Activated CD8-positive, alpha-beta memory T cell treated with anti-CD3 and anti-CD28 coated beads, Interleukin-2, amount 10 ng/mL, durations not matched to agents 7 days and 5 days (primary cell): ENCODE measurements at regions of chr13 and their contacts with region 1.

Region 1: DNA sequence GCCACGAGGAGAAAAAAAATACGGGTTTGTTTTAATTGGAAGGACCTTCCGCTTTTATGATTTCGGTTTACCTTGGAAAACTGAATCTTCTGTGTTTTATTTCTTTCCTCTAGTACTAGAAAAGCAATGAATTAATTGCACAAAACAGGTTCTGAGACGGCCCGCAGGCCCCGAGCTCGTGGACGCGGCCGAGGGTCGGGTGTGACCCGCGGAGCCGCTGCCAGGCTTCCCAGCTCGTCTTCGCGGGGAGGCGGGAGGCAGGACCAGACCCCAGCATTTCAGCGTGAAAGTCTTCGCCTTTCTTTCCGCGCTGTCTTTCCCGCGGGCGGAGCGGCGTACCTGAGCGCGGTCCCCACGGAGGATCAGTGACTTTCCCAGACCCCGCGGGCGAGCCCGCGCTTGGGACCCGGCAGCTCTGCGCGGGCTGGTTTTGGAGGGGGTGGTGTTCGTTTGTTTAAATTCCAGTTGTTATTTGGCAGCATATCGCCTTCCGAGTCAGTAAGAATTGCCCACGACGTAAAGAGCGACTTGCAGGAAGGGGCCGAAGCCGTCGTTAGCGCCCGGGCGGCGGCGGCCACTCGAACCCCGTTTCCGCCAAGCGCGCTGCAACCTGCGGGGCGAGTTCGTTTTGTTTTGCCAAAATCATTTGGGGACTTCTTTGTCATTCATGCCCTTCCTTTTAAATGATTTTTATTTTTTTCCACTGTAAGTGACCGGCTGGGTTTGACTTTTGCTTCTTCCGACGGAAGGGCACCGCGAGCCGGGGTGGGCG is 76.2 kb downstream of the ZIC5 start:
- DNase-seq: no peak
- ATAC-seq: peak; percentile 26
- H3K4me3 Mint-ChIP-seq: peak overlapping the region; percentile 74
- H3K27ac Mint-ChIP-seq: no peak overlapping the region
- H3K4me1 Mint-ChIP-seq: peaks cover 17% of the 10 kb centered on the region
- H3K27me3 Mint-ChIP-seq: peaks cover 65% of the 10 kb centered on the region

Region 2: GRCh38 chr13:99617474-99618255 is 277.7 kb before region 1 on chr13:
- CTCF ChIA-PET with region 1: no interaction called
- DNase-seq: peak; percentile 50
- ATAC-seq: peak; percentile 53
- H3K4me3 Mint-ChIP-seq: no peak overlapping the region
- H3K27ac Mint-ChIP-seq: no peak overlapping the region
- H3K4me1 Mint-ChIP-seq: peaks cover 12% of the 10 kb centered on the region
- H3K27me3 Mint-ChIP-seq: no peaks in the 10 kb centered on the region

Region 3: DNA sequence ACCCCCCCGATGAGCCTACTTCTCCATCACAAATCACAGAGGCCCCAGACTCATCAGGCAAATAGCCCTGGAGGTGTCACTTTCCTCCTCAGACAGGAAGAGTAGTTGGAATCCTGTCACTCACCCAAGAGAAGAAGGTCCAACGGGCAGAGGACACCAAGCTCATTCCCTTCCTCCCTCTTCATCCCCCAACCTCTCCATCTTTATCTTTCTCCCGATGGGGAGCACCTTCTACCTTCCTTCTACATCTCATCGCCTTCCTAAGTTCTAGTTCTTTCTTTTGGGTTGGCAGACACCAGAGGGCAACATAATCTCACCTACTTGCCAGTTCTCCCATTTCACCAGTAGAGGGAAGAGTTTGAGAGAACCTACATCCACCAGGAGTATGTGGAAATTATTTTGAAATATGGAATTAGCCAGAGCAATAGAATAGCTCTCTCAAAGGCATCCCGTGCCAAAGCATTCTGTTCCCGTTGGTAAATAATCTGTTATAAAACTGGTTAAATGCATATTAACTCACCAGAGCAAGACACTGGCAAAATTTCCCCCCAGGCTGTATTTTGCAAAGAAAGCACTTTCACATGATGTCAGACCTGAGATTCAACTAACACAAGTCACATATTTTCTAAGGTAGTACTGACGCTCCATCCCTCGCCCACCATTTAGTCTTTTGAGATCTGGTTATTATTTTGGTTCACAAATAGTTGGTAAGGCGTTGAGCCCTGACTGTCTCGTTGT is 21.1 kb after region 1 on chr13:
- CTCF ChIA-PET with region 1: interaction called, 83 read pairs
- DNase-seq: no peak
- ATAC-seq: peak; percentile 63
- H3K4me3 Mint-ChIP-seq: no peak overlapping the region
- H3K27ac Mint-ChIP-seq: peak overlapping the region; percentile 26
- H3K4me1 Mint-ChIP-seq: peaks cover 40% of the 10 kb centered on the region
- H3K27me3 Mint-ChIP-seq: peaks cover 23% of the 10 kb centered on the region